Activated CD4-positive, alpha-beta memory T cell treated with anti-CD3 and anti-CD28 coated beads, Interleukin-2, amount 10 ng/mL, durations not matched to agents 7 days and 5 days (primary cell): ENCODE measurements at regions of chr10 and their contacts with region 1.

Region 1: DNA sequence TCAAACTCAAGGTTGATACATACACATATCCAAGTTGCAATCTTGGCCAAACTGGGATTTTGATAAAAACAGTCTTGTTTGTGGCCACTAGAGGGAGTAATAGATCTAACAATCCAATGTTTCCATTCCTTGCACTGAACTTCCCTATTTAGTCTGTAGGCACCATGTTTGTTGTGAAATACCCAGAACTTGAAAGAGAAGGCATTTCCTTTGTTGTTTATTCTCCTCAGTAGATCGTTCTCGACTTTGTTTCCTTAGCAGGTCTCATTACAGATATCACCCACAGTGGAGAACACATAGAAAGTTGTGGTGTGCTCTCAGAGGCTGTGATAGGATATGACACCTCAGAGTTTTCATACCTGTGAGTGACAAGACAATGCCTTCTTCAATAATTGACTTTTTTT is 70.3 kb upstream of the MXI1 start:
- DNase-seq: no peak
- H3K4me3 Mint-ChIP-seq: no peak overlapping the region
- H3K27ac Mint-ChIP-seq: peak overlapping the region; percentile 32
- H3K4me1 Mint-ChIP-seq: peaks cover 41% of the 10 kb centered on the region
- H3K27me3 Mint-ChIP-seq: no peaks in the 10 kb centered on the region

Region 2: DNA sequence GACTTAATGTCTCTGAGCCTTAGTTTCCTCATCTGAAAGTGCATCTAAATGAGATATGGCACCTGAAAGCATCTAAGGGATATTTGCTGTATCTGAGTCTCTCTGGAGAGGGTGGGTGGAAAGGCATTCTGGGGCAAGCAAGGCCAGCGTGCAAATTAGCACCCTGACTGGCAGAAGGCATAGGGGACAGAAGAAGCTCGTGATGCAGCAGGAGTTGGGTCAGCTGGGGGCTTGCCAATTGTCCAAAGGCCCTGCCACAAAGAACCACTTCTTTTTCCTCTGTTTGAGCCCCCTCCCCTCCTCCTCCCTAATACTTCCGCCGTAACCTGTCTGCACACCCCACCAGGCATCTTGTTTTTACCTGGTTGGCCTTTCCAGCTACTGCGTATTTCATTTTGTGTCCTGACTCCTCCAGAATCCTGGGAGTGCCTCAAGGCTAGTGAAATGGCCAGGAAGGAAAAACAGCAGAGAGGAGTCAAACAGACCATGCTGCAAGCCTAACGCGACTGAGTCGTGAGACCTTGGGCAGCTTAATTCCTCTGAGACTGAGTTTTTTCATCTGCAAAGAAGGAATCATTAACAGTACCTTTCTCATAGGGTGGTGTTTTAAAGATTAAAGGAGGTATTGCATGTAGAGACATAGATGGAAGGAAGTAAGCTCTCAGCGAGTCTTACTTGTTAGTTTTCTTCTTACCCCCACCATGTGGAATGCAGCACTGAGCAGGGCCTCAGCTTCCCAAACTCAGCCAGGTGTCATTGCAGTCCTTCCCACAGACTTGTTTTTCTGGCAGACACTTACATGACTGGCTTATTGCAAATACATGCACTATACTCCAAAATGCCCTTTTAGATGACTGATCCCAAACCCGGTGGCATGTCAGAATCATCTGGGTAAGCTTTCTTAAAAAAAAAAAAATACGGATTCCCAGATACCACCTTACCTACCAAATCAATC is 21.2 kb after region 1 on chr10:
- CTCF ChIA-PET with region 1: interaction called, 12 read pairs
- POLR2A ChIA-PET with region 1: interaction called, 27 read pairs
- DNase-seq: no peak
- H3K4me3 Mint-ChIP-seq: no peak overlapping the region
- H3K27ac Mint-ChIP-seq: peak overlapping the region; percentile 95
- H3K4me1 Mint-ChIP-seq: peaks cover 52% of the 10 kb centered on the region
- H3K27me3 Mint-ChIP-seq: peaks cover 70% of the 10 kb centered on the region

Region 3: DNA sequence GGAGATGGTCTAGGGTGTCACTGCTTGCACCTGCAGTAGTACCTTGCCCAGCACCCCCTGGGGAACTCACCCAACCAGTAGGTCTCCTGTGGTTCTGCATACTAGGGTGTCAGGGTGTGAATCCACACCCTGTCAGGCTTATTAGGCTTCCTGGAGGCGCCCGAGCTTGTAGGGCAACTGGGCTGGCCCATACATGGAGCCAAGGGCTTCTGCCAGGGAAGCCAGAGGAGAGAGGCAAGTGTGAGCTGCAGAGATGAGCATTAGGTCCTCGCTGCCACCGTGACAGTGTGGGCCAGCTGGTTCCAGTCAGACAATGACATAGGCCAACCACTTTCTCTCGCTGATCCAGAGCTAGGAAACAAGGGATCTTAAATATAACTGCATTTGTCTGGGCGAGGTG is 81.5 kb after region 1 on chr10:
- CTCF ChIA-PET with region 1: interaction called, 39 read pairs
- POLR2A ChIA-PET with region 1: interaction called, 4 read pairs
- DNase-seq: no peak
- H3K4me3 Mint-ChIP-seq: no peak overlapping the region
- H3K27ac Mint-ChIP-seq: no peak overlapping the region
- H3K4me1 Mint-ChIP-seq: peaks cover 82% of the 10 kb centered on the region
- H3K27me3 Mint-ChIP-seq: no peaks in the 10 kb centered on the region

Region 4: GRCh38 chr10:110225756-110226542 is 88.8 kb after region 1 on chr10:
- CTCF ChIA-PET with region 1: interaction called, 27 read pairs
- POLR2A ChIA-PET with region 1: interaction called, 4 read pairs
- DNase-seq: peak; percentile 88
- H3K4me3 Mint-ChIP-seq: peak overlapping the region; percentile 88
- H3K27ac Mint-ChIP-seq: peak overlapping the region; percentile 82
- H3K4me1 Mint-ChIP-seq: peaks cover 53% of the 10 kb centered on the region
- H3K27me3 Mint-ChIP-seq: no peaks in the 10 kb centered on the region

Region 5: DNA sequence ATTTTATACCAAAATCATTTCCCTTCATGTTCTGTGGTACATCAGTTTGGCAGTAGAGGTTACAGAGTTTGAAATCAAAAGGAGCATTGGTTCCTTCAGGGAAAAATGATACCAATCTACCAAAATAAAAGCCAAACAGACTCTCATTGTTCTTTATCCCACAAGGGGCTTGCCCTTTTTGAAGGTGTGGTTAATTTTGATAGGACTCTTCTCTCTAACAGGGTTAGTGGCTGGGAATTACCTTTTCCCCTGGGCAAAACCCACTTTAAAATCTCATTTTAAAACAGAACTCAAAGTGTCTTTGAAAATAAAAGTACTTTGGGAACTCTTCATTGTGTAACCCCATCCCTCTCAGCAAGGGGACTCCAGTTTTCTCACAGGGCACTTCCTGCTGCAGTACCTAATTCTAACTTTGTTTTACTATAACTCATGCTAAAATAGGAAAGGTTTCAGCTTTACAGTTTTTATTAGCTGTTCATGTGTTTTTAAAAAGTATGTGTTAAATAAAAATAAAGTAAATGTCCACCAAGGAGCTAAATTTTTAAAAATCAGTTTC is 137.0 kb after region 1 on chr10:
- CTCF ChIA-PET with region 1: interaction called, 37 read pairs
- POLR2A ChIA-PET with region 1: no interaction called
- DNase-seq: no peak
- H3K4me3 Mint-ChIP-seq: no peak overlapping the region
- H3K27ac Mint-ChIP-seq: no peak overlapping the region
- H3K4me1 Mint-ChIP-seq: peaks cover 41% of the 10 kb centered on the region
- H3K27me3 Mint-ChIP-seq: peaks cover 5% of the 10 kb centered on the region

Region 6: GRCh38 chr10:110279407-110279986 is 142.4 kb after region 1 on chr10:
- CTCF ChIA-PET with region 1: interaction called, 37 read pairs
- POLR2A ChIA-PET with region 1: no interaction called
- DNase-seq: peak; percentile 44
- H3K4me3 Mint-ChIP-seq: no peak overlapping the region
- H3K27ac Mint-ChIP-seq: no peak overlapping the region
- H3K4me1 Mint-ChIP-seq: peaks cover 29% of the 10 kb centered on the region
- H3K27me3 Mint-ChIP-seq: peaks cover 3% of the 10 kb centered on the region

Region 7: GRCh38 chr10:110285501-110285900 is 148.4 kb after region 1 on chr10:
- CTCF ChIA-PET with region 1: interaction called, 37 read pairs
- POLR2A ChIA-PET with region 1: no interaction called
- DNase-seq: no peak
- H3K4me3 Mint-ChIP-seq: no peak overlapping the region
- H3K27ac Mint-ChIP-seq: no peak overlapping the region
- H3K4me1 Mint-ChIP-seq: peaks cover 3% of the 10 kb centered on the region
- H3K27me3 Mint-ChIP-seq: no peaks in the 10 kb centered on the region

Region 8: DNA sequence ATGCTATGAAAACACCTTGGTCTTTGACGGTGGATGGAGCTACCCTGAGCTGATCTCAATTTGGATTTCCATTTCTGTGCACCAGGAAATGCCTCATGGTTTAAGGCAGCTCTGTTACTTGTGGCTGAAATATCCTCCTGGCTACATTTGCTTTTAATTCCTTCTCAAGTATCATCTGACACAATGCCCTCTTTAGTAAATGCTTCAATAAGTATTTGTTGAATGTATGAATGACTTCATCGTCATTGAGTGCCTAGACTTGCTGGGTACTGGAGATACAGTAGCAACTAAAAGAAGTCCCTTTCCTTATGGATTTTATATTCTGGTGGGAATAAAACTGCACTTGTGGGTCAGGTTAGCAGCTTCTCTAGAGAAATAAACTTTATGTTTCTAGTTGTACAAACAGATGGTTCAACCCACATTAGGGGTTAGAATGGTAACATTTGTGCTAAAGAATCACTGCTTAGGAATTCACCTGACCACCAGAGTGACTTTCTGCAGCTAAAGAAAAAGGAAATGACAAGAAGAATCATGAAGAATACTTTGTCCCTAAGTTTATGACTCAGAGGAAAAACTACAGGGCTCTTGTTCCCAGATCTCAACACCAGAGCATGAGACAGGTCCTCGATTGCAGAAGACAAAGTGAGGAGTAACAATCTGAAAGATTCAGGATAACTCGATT is 189.3 kb after region 1 on chr10:
- CTCF ChIA-PET with region 1: no interaction called
- POLR2A ChIA-PET with region 1: no interaction called
- DNase-seq: no peak
- H3K4me3 Mint-ChIP-seq: no peak overlapping the region
- H3K27ac Mint-ChIP-seq: peak overlapping the region; percentile 21
- H3K4me1 Mint-ChIP-seq: peaks cover 37% of the 10 kb centered on the region
- H3K27me3 Mint-ChIP-seq: peaks cover 3% of the 10 kb centered on the region

Region 9: DNA sequence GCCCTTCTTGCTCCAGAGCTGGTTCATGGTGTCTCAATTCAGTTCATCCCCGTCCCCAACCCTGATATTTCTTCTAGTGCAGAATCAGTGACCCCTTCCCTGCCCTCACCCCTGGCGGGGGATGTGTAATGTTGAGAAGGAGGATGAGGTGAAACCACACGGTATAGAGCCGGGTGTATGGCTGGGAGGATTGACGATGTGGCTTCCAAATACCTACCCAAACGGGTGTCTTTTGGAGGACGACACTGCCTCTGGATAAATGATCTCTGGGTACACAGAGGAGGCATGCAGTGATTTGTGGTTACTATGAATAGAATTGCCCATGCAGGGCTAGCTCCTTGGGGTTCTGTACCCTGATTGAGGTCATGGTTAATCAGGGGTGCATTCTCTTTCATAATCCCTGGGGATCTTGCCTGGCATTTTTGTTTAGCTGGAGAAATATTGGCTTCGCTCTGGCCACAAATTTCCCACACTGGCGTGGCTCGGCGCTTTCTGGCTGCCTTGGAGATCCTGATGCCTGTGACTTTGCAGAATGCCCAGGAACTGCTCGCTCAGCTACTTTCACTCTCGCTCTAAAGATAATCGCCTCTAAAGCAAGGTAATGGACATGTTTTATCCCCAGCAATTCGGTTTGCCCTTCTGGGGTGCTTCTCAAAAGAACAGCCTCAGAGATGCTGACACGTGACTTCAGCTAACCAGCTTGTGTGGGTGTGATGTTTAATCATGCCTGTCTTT is 596.2 kb after region 1 on chr10:
- CTCF ChIA-PET with region 1: no interaction called
- POLR2A ChIA-PET with region 1: no interaction called
- DNase-seq: no peak
- H3K4me3 Mint-ChIP-seq: peak overlapping the region; percentile 25
- H3K27ac Mint-ChIP-seq: no peak overlapping the region
- H3K4me1 Mint-ChIP-seq: peaks cover 15% of the 10 kb centered on the region
- H3K27me3 Mint-ChIP-seq: peaks cover 27% of the 10 kb centered on the region